CD8-positive, alpha-beta memory T cell (primary cell): ENCODE measurements at regions of chr19 and their contacts with region 1.

Region 1: DNA sequence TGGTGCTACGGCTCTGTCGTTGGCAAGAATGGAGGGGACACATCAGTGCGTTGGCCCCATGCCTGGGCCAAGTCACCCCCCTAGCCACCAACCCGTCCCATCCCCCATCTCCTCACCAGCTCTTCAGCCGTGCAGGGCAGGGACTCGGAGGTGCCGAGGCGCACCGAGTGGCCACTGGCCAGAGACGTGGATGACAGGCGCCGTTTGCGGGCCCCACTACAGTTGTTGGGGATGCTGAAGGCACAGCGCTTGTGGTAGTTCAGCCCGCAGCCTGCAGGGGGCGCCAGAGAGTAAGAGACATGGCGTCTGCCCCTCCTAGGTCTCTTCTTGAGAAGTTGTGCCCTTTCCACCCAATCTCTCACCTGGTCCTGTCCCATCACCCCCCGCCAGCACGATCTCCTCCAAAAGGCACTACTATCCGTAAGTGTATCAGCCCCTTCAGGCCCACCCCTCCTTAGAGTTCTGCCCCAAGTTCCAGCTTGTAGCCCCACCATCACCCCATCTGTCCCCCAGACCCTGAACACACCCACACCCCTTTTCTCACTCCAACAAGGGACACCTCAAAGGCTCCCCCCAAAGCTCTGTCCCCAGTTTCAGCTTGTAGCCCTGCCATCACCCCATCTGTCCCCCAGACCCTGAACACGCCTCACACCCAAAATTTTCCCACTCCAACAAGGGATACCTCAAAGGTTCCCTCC is 12.4 kb downstream of the PRKD2 start:
- DNase-seq: peak; percentile 64 to 88 (median 82)
- H3K4me3 ChIP-seq: no peak overlapping the region
- H3K4me3 Mint-ChIP-seq: peak overlapping the region in 2 of 7 donors; percentile 8 to 27
- H3K27ac ChIP-seq: no peak overlapping the region
- H3K27ac Mint-ChIP-seq: peak overlapping the region; percentile 18 to 98 (median 81)
- H3K4me1 ChIP-seq: peaks cover 8% of the 10 kb centered on the region
- H3K4me1 Mint-ChIP-seq: peaks cover 8 to 12% (median 12%) of the 10 kb centered on the region in 3 donors
- H3K27me3 ChIP-seq: no peaks in the 10 kb centered on the region
- H3K27me3 Mint-ChIP-seq: peaks cover 0 to 3% of the 10 kb centered on the region in 2 donors

Region 2: GRCh38 chr19:46650445-46650844 is 54.1 kb before region 1 on chr19:
- CTCF ChIA-PET with region 1: no interaction called
- POLR2A ChIA-PET with region 1: no interaction called
- DNase-seq: no peak
- H3K4me3 ChIP-seq: no peak overlapping the region
- H3K4me3 Mint-ChIP-seq: peak overlapping the region in 2 of 7 donors; percentile 4 to 25
- H3K27ac ChIP-seq: no peak overlapping the region
- H3K27ac Mint-ChIP-seq: no peak overlapping the region
- H3K4me1 ChIP-seq: no peaks in the 10 kb centered on the region
- H3K4me1 Mint-ChIP-seq: peaks cover 8 to 12% (median 10%) of the 10 kb centered on the region in 3 donors
- H3K27me3 ChIP-seq: no peaks in the 10 kb centered on the region
- H3K27me3 Mint-ChIP-seq: peaks cover 42 to 75% of the 10 kb centered on the region in 2 donors

Region 3: GRCh38 chr19:46674416-46675183 is 29.9 kb before region 1 on chr19:
- CTCF ChIA-PET with region 1: interaction called, 10 read pairs
- POLR2A ChIA-PET with region 1: no interaction called
- DNase-seq: no peak
- H3K4me3 ChIP-seq: no peak overlapping the region
- H3K4me3 Mint-ChIP-seq: no peak overlapping the region
- H3K27ac ChIP-seq: no peak overlapping the region
- H3K27ac Mint-ChIP-seq: peak overlapping the region in 3 of 8 donors; percentile 8 to 69 (median 66)
- H3K4me1 ChIP-seq: no peaks in the 10 kb centered on the region
- H3K4me1 Mint-ChIP-seq: peaks cover 0 to 9% (median 2%) of the 10 kb centered on the region in 3 donors
- H3K27me3 ChIP-seq: no peaks in the 10 kb centered on the region
- H3K27me3 Mint-ChIP-seq: no peaks in the 10 kb centered on the region

Region 4: DNA sequence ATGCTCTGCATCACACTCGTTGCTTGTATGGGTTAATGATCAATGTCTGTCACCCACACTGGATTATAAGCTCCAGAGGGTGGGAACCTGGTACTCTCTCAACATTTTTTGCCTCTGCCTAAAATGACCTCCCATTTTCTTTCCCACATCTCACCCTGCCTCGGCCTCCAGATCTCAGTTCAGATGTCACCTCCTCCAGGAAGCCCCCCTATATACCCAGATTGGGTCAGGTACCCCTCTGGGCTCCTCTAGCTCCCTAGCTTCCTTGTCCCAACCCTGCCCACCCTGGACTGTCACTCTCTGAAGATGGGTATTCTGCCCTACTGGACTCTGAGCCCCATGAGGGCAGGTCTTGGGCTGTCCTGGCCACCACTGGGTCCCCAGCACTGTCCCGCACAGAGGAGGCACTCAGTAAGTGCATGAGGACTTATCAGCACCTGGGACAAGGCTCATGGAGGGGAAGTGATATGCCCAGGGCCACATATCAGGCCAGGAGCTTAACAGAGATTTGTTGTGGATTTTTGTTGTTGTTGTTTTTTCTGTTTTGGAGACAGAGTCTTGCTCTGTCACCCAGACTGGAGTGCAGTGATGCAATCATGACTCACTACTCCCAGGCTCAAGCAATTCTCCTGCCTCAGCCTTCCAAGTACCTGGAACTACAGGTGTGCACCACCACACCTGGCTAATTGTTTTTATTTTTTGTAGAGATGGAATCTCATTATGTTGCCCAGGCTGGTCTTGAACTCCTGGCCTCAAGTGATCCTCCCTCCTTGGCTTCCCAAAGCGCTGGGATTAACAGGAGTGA is 11.4 kb before region 1 on chr19:
- CTCF ChIA-PET with region 1: interaction called, 13 read pairs
- POLR2A ChIA-PET with region 1: no interaction called
- DNase-seq: no peak
- H3K4me3 ChIP-seq: no peak overlapping the region
- H3K4me3 Mint-ChIP-seq: no peak overlapping the region
- H3K27ac ChIP-seq: no peak overlapping the region
- H3K27ac Mint-ChIP-seq: peak overlapping the region in 6 of 8 donors; percentile 19 to 93 (median 66)
- H3K4me1 ChIP-seq: no peaks in the 10 kb centered on the region
- H3K4me1 Mint-ChIP-seq: peaks cover 2 to 5% (median 5%) of the 10 kb centered on the region in 3 donors
- H3K27me3 ChIP-seq: no peaks in the 10 kb centered on the region
- H3K27me3 Mint-ChIP-seq: no peaks in the 10 kb centered on the region

Region 5: DNA sequence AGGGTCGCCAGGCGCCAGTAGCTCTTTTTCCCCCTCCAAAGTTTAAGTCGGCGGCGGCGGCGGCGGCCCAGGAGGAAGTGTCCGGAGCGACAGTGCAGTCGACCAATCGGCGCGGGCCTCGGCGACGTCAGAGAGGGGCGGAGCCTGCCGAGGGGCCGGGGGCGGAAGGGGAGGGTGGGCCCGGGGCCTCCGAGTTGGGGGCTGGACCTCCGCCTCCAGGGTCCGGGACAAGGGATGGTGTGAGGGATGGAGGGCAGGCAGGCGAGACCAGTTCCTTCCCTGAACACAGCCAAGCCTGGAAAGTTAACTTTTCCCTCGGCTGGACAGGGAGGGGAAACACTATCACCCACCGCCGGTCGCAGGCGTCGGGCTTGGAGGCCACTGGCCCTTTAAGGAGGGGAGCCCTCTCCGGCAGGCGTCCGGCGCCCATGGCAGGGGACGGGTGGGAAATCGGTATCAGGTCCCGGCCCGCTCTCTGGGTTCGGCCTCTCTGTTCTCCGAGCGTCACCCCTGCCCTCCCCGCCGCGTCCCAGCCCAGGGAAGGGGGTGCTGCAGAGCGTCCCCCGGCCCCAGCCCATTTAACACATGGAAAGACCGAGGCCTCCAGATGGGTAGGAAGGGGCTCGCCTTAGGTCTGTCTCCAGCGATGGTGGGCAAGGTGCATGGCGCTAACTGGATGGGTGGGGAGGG is 12.7 kb after region 1 on chr19 and contains the start of gene PRKD2:
- CTCF ChIA-PET with region 1: interaction called, 39 read pairs
- POLR2A ChIA-PET with region 1: interaction called, 11 read pairs
- DNase-seq: peak; percentile 71 to 89 (median 83)
- H3K4me3 ChIP-seq: peak within 1 kb of the TSS; percentile 90
- H3K4me3 Mint-ChIP-seq: peak within 1 kb of the TSS; percentile 94 to 98 (median 95)
- H3K27ac ChIP-seq: peak within 1 kb of the TSS; percentile 92
- H3K27ac Mint-ChIP-seq: peak within 1 kb of the TSS; percentile 94 to 99 (median 98)
- H3K4me1 ChIP-seq: peaks cover 37% of the 10 kb centered on the region
- H3K4me1 Mint-ChIP-seq: peaks cover 42 to 77% (median 49%) of the 10 kb centered on the region in 3 donors
- H3K27me3 ChIP-seq: no peaks in the 10 kb centered on the region
- H3K27me3 Mint-ChIP-seq: no peaks in the 10 kb centered on the region
- total RNA-seq, gene PRKD2: 61.6 to 63.8 TPM

Region 6: DNA sequence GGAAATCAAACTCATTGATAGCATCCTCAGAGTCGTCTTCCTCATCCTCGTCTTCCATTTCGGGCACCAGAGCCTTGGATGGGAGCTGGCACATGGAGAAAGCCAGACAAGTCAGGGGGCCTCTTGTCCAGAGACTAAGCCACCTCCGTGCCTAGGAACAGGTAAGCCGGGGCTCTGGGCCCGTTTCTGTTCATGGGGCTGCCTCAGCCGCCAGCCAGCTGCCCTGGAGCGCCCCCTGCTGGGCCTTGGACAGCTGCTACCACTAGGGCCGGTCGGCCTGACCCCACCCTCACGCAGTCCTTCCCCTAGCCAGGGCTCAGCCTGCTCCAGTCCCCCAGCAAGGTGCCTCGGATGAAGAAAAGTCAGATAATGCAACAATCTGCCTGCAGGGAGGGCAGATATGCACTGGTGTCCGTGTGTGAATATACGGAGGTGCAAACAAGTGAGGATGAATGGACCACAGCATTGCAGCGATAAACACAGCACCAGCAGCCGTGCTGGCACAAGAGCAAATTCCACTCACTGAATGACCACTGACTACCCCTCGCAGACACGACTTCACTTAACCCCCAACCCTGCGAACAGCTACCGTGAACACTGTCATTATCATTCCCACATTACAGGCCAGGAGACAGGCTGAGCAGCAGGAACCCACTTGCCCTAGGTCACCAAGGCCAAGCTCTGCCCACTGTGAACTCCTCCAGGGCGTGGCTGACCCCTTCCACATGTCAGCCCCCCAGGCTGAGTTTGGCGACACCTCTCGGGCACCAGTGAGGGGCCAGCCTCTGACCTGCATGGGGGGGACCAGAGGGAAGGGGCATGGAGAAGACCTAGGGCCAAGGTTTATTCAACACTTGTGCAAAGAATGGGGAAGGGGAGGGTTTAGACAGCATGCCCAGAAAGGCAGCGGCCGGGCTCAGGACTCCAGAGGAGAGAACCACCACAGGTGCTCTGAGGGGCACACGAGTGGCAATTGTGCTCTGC is 24.5 kb after region 1 on chr19:
- CTCF ChIA-PET with region 1: interaction called, 124 read pairs
- POLR2A ChIA-PET with region 1: interaction called, 11 read pairs
- DNase-seq: peak; percentile 75 to 87 (median 78)
- H3K4me3 ChIP-seq: no peak overlapping the region
- H3K4me3 Mint-ChIP-seq: no peak overlapping the region
- H3K27ac ChIP-seq: peak overlapping the region; percentile 7
- H3K27ac Mint-ChIP-seq: peak overlapping the region in 6 of 8 donors; percentile 13 to 91 (median 66)
- H3K4me1 ChIP-seq: peaks cover 6% of the 10 kb centered on the region
- H3K4me1 Mint-ChIP-seq: peaks cover 10 to 17% (median 12%) of the 10 kb centered on the region in 3 donors
- H3K27me3 ChIP-seq: no peaks in the 10 kb centered on the region
- H3K27me3 Mint-ChIP-seq: no peaks in the 10 kb centered on the region

Region 7: GRCh38 chr19:46753420-46754155 is 49.1 kb after region 1 on chr19:
- CTCF ChIA-PET with region 1: interaction called, 14 read pairs
- POLR2A ChIA-PET with region 1: no interaction called
- DNase-seq: peak; percentile 45 to 76 (median 54)
- H3K4me3 ChIP-seq: no peak overlapping the region
- H3K4me3 Mint-ChIP-seq: peak overlapping the region in 1 of 7 donors; percentile 9
- H3K27ac ChIP-seq: no peak overlapping the region
- H3K27ac Mint-ChIP-seq: peak overlapping the region in 2 of 8 donors; percentile 72 to 89
- H3K4me1 ChIP-seq: no peaks in the 10 kb centered on the region
- H3K4me1 Mint-ChIP-seq: peaks cover 9 to 18% (median 13%) of the 10 kb centered on the region in 3 donors
- H3K27me3 ChIP-seq: no peaks in the 10 kb centered on the region
- H3K27me3 Mint-ChIP-seq: no peaks in the 10 kb centered on the region